ENCODE measurements at regions of chr10 and their contacts with region 1.

Region 1: DNA sequence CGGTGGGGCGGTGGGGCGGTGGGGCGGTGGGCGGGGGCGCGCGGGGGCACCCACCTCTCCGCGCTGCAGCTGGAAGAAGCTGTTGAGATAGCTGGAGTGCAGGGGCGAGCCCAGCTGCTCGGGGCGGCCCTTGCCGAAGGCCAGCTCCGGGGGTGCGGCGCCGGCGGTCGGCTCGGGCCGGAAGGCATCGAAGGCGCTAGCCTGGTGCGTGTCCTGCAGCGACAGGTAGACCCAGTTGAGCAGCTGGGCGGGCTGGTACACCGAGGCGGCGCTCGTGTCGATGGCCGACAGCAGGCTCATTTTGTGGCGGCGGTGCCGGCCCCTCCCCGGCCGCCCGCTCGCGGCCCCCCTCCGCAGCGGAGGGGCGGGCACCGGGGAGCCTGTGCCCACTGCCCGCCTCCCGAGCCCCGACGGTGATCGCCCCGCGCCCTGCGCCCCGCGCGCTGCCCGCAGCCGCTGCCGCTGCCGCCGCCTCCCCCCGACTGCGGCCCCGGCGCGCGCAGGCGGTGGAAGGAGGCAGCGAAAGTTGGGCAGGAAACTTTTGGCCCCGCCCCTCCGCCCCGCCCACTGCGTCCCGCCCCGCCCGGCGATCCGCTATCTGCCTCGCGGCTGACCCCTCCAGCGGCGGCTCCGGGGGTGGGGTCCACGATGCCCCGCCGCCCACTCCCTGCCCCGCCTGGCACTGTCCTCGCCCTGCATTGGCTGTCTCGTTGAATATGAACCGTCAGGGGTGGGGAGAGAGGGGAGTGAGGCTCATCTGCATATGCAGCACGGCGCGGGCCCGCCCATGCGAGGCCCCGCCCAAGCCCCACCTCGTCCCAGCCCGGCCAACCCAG is at the start of gene ZCCHC24:
- DNase-seq: peak; percentile 90 to 98 (median 94)
- ATAC-seq: peak; percentile 93
- H3K4me3 ChIP-seq: peak within 1 kb of the TSS; percentile 55 to 59
- H3K4me3 Mint-ChIP-seq: peak within 1 kb of the TSS; percentile 85
- H3K27ac ChIP-seq: peak within 1 kb of the TSS; percentile 14 to 22
- H3K27ac Mint-ChIP-seq: peak within 1 kb of the TSS; percentile 67
- H3K4me1 ChIP-seq: peaks cover 24% of the 10 kb centered on the region
- H3K4me1 Mint-ChIP-seq: peaks cover 24% of the 10 kb centered on the region
- H3K27me3 ChIP-seq: no peaks in the 10 kb centered on the region
- H3K27me3 Mint-ChIP-seq: no peaks in the 10 kb centered on the region
- CTCF ChIP-seq: no peak
- total RNA-seq, gene ZCCHC24: 1.1 to 1.9 TPM

Region 2: DNA sequence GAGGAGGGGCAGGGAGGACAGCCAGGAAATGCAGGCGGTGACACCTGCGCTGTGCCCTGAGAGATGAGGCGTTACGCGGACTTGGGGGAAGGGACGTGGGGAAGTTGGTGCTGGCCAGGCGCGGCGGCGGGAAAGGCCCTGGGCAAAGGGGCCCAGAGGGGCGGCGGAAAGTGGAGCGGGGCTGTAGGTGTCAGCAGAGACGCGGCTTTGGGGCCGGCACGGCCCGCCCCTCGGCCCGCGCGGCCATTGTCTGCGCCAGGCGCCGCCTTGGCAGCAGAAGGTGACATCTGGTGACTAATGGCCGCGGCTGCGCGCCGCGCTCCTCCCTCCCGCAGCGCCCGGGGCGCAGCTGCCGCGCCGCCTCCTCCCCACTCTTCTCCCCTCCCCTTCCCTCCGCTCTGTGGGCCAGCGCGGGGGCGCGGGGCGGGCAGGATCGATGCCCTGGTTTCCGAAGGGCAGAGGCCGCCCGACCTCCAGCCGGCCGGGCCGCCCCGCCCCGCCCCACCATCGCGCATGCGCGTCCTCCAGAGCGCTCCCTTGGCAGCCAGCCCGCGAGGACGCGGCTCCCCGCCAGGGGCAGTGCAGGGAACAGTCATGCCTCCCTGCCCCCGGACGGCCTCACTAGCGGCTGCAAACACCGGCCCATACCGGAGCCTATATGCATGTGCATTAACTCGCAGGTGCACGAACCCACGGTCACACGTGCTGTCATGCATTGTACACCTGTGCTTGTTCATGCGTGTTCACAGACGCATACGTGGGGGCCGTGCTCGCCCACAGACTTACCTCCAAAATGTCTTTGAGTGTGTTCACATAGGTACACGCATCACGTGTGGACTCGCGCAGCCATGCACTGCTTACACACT is 1142.1 kb before region 1 on chr10:
- CTCF ChIA-PET with region 1: no interaction called
- POLR2A ChIA-PET with region 1: no interaction called
- intact Hi-C with region 1: loop called (anchors 1 to 2 kb)
- DNase-seq: peak; percentile 94 to 99 (median 96)
- ATAC-seq: peak; percentile 92
- H3K4me3 ChIP-seq: peak overlapping the region; percentile 73 to 82
- H3K4me3 Mint-ChIP-seq: peak overlapping the region; percentile 97
- H3K27ac ChIP-seq: peak overlapping the region; percentile 76 to 92
- H3K27ac Mint-ChIP-seq: peak overlapping the region; percentile 97
- H3K4me1 ChIP-seq: peaks cover 17% of the 10 kb centered on the region
- H3K4me1 Mint-ChIP-seq: peaks cover 20% of the 10 kb centered on the region
- H3K27me3 ChIP-seq: no peaks in the 10 kb centered on the region
- H3K27me3 Mint-ChIP-seq: no peaks in the 10 kb centered on the region
- CTCF ChIP-seq: peak; percentile 79

Region 3: DNA sequence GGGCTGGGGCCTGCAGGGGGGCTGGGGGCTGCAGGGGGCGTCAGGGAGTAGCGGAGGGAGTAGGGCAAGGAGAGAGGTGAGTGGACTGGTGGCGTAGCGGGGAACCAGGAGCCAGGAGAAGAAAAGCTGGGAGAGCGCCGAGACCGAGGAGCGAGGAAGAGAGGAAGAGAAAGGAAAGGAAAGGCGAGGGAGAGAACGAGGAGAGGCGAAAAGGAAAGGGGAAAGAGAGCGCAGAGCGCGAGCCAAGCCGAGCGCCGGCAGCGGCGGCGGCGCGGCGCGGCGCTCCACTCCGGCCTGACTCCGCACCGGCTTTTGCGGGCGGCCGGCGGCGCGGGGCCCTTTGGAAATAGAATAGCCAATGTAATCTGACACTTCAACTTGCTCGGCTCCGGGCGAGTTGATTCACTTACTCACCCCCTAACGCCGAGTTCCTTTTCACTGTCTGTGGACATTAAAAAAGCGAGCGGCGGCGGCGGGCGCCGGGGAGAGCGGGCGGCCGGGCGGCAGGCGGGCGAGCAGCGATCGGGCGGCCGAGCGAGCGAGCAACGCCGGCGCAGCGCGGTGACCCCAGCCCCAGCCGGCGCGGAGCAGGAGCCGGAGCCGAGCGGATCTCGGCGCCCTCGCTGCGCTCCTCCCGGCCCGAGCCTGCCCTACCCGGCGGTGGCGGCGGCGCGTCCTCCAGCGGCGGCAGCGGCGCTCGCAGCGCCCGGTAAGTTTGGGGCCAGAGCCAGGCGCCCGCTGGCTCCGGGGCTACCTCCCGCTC is 376.6 kb before region 1 on chr10 and contains the start of gene ZMIZ1:
- CTCF ChIA-PET with region 1: no interaction called
- POLR2A ChIA-PET with region 1: no interaction called
- intact Hi-C with region 1: loop called (anchors 2 to 5 kb)
- DNase-seq: peak; percentile 61 to 87 (median 80)
- ATAC-seq: peak; percentile 60
- H3K4me3 ChIP-seq: peak within 1 kb of the TSS; percentile 83 to 94
- H3K4me3 Mint-ChIP-seq: peak within 1 kb of the TSS; percentile 94
- H3K27ac ChIP-seq: peak within 1 kb of the TSS; percentile 36 to 44
- H3K27ac Mint-ChIP-seq: peak within 1 kb of the TSS; percentile 85
- H3K4me1 ChIP-seq: peaks cover 36% of the 10 kb centered on the region
- H3K4me1 Mint-ChIP-seq: peaks cover 48% of the 10 kb centered on the region
- H3K27me3 ChIP-seq: no peaks in the 10 kb centered on the region
- H3K27me3 Mint-ChIP-seq: no peaks in the 10 kb centered on the region
- CTCF ChIP-seq: no peak
- total RNA-seq, gene ZMIZ1: 10.1 to 10.8 TPM

Region 4: GRCh38 chr10:79286318-79286951 is 158.9 kb before region 1 on chr10:
- CTCF ChIA-PET with region 1: no interaction called
- POLR2A ChIA-PET with region 1: no interaction called
- intact Hi-C with region 1: loop called (anchors 1 to 10 kb)
- DNase-seq: peak; percentile 53 to 94 (median 86)
- ATAC-seq: peak; percentile 94
- H3K4me3 ChIP-seq: peak overlapping the region; percentile 16 to 23
- H3K4me3 Mint-ChIP-seq: peak overlapping the region; percentile 72
- H3K27ac ChIP-seq: peak overlapping the region; percentile 16 to 81
- H3K27ac Mint-ChIP-seq: peak overlapping the region; percentile 94
- H3K4me1 ChIP-seq: peaks cover 36% of the 10 kb centered on the region
- H3K4me1 Mint-ChIP-seq: peaks cover 36% of the 10 kb centered on the region
- H3K27me3 ChIP-seq: no peaks in the 10 kb centered on the region
- H3K27me3 Mint-ChIP-seq: no peaks in the 10 kb centered on the region
- CTCF ChIP-seq: no peak

Region 5: GRCh38 chr10:79374312-79375191 is 70.8 kb before region 1 on chr10:
- CTCF ChIA-PET with region 1: interaction called, 11 read pairs
- POLR2A ChIA-PET with region 1: no interaction called
- intact Hi-C with region 1: loop called in 1 of 2 experiments (anchors 1 kb)
- DNase-seq: peak; percentile 54 to 88 (median 74)
- ATAC-seq: peak; percentile 83
- H3K4me3 ChIP-seq: no peak overlapping the region
- H3K4me3 Mint-ChIP-seq: no peak overlapping the region
- H3K27ac ChIP-seq: no peak overlapping the region
- H3K27ac Mint-ChIP-seq: peak overlapping the region; percentile 7
- H3K4me1 ChIP-seq: no peaks in the 10 kb centered on the region
- H3K4me1 Mint-ChIP-seq: peaks cover 5% of the 10 kb centered on the region
- H3K27me3 ChIP-seq: no peaks in the 10 kb centered on the region
- H3K27me3 Mint-ChIP-seq: no peaks in the 10 kb centered on the region
- CTCF ChIP-seq: peak; percentile 98

Region 6: GRCh38 chr10:80205478-80206276 is 760.3 kb after region 1 on chr10 and contains the start of gene ANXA11:
- CTCF ChIA-PET with region 1: no interaction called
- POLR2A ChIA-PET with region 1: no interaction called
- intact Hi-C with region 1: loop called (anchors 10 kb)
- DNase-seq: peak; percentile 70 to 93 (median 87)
- ATAC-seq: peak; percentile 82
- H3K4me3 ChIP-seq: peak within 1 kb of the TSS; percentile 67 to 70
- H3K4me3 Mint-ChIP-seq: peak within 1 kb of the TSS; percentile 96
- H3K27ac ChIP-seq: peak within 1 kb of the TSS; percentile 72 to 82
- H3K27ac Mint-ChIP-seq: peak within 1 kb of the TSS; percentile 94
- H3K4me1 ChIP-seq: peaks cover 49% of the 10 kb centered on the region
- H3K4me1 Mint-ChIP-seq: peaks cover 54% of the 10 kb centered on the region
- H3K27me3 ChIP-seq: no peaks in the 10 kb centered on the region
- H3K27me3 Mint-ChIP-seq: no peaks in the 10 kb centered on the region
- CTCF ChIP-seq: no peak
- total RNA-seq, gene ANXA11: 136 to 141 TPM

Measured in CD8-positive, alpha-beta T cell (primary cell).